Ovary (tissue), 10 donors: ENCODE measurements at regions of chr1 and their contacts with region 1.

Region 1: DNA sequence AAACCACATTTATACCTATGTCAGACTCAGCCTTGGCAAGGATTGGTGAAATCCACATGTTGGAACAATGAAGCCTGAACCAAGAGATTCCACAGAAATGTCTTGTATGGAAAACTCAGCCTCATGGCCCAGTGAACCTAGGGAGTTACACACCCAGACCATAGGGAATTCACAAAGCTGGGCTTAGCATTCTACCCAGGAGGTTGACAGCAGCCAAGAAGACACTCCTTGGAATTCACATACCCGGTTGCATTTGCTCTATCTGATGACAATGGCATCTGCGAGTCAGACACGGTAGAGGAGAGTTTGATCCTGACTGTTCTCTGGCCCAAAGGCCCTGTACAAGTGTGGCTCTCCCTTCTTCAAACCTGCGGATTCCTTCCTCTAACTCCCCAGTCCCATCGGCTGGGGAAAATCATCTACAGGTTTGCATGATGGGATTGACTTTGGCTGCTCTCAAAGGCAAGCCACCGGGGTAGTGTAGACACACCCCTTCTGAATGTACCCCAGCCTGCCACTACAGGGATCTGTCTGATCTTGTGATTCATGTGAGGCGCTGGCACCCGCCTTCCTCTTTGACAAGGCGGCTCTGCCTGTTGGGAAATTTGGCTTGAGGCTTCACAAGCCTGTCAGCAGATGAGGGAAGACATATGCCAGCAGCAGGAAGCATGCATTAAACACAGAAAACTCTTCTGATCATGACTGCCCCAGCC is 297.3 kb upstream of the KAZN start:
- DNase-seq: no peak
- H3K4me3 ChIP-seq: no peak overlapping the region
- H3K27ac ChIP-seq: no peak overlapping the region
- H3K4me1 ChIP-seq: peaks cover 3% of the 10 kb centered on the region
- H3K27me3 ChIP-seq: no peaks in the 10 kb centered on the region
- CTCF ChIP-seq: no peak
- EP300 ChIP-seq: no peak
- POLR2A ChIP-seq: no peak

Region 2: GRCh38 chr1:14285238-14285637 is 15.9 kb before region 1 on chr1:
- intact Hi-C with region 1: loop called in 1 of 4 experiments (anchors 2 kb)
- DNase-seq: no peak
- H3K4me3 ChIP-seq: no peak overlapping the region
- H3K27ac ChIP-seq: no peak overlapping the region
- H3K4me1 ChIP-seq: no peaks in the 10 kb centered on the region
- H3K27me3 ChIP-seq: no peaks in the 10 kb centered on the region
- CTCF ChIP-seq: no peak
- EP300 ChIP-seq: no peak
- POLR2A ChIP-seq: no peak

Region 3: DNA sequence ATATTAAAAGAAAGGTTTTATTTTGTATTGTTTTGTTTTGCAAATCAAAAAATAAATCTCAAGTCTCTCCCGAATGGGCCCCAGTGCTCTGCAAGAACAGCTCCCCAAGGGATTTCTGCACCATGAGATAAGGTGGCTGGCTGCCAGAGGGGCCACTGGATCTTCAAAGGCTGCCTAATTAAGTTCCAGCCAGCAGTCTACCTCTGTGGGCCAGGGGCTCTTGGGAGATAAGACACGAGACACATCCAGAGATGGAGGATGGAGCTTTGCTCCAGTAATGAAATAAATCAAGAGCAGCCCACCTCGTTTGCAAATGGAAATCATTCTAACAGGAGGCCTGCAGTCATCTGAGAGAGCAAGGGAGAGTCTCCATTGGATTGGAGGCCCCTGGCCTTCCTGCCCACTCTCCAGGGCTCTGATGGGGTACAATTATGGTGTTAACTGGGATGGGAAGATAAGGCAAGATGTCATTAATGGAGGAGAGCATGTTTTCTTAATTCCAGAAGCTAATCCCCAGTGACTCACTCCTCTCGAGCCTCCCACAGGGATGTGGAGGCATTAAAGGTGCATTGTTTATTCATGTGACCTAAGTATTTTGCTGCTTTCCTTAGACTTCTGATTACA is 142.1 kb after region 1 on chr1:
- intact Hi-C with region 1: no loop called
- DNase-seq: no peak
- H3K4me3 ChIP-seq: no peak overlapping the region
- H3K27ac ChIP-seq: no peak overlapping the region
- H3K4me1 ChIP-seq: no peaks in the 10 kb centered on the region
- H3K27me3 ChIP-seq: no peaks in the 10 kb centered on the region
- CTCF ChIP-seq: no peak
- EP300 ChIP-seq: no peak
- POLR2A ChIP-seq: no peak